Endothelial cell of umbilical vein (primary cell): ENCODE measurements at regions of chr3 and their contacts with region 1.

Region 1: GRCh38 chr3:23761440-23761896 is 44.3 kb upstream of the UBE2E1 start:
- DNase-seq: peak; percentile 60
- H3K4me3 ChIP-seq: no peak overlapping the region
- H3K27ac ChIP-seq: no peak overlapping the region
- H3K4me1 ChIP-seq: no peaks in the 10 kb centered on the region
- H3K27me3 ChIP-seq: no peaks in the 10 kb centered on the region
- CTCF ChIP-seq: peak; percentile 46
- POLR2A ChIP-seq: no peak

Region 2: DNA sequence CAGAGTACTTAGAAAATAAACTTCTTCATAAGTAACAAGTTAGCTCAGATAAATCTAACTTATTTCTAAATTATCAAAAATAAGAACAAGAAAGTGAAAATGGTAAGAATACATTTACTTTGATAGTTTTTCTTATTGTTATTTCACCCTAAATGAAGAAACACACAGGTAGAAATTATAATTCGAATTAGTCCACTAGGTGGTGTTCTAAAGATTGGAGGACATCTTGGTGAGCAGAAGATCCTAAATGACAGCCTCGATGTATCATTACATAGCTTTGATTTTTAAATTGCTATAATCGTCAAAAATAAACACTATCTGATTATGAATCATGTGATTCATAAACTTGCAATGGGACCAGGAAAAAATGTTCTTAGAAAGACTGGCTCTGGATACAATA is 839.2 kb before region 1 on chr3:
- CTCF ChIA-PET with region 1: interaction called, 4 read pairs
- POLR2A ChIA-PET with region 1: no interaction called
- dilution Hi-C with region 1: no loop called
- intact Hi-C with region 1: loop called (anchors 2 kb)
- DNase-seq: peak; percentile 6
- H3K4me3 ChIP-seq: no peak overlapping the region
- H3K27ac ChIP-seq: no peak overlapping the region
- H3K4me1 ChIP-seq: peaks cover 13% of the 10 kb centered on the region
- H3K27me3 ChIP-seq: no peaks in the 10 kb centered on the region
- CTCF ChIP-seq: no peak
- POLR2A ChIP-seq: no peak

Region 3: DNA sequence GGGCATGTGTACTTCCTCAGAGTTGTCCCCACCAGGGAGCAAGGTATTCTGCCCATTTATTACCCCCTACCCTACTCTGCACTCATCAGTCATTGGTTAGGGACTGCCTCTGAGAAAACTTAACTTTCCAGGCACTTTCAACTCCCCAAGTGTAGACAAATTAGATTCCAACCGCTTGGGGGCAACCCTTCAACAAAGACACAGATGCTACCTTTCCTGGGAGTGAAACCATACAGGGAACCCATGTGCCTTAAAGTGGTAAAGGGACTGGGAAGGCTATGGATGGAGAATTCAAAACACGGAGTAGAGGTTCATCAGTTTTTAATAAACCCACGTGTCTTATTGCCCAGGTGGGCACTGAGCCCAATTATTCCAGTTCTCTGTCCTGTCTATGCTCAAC is 577.7 kb before region 1 on chr3:
- CTCF ChIA-PET with region 1: no interaction called
- POLR2A ChIA-PET with region 1: no interaction called
- dilution Hi-C with region 1: no loop called
- intact Hi-C with region 1: loop called (anchors 1 kb)
- DNase-seq: peak; percentile 56
- H3K4me3 ChIP-seq: no peak overlapping the region
- H3K27ac ChIP-seq: no peak overlapping the region
- H3K4me1 ChIP-seq: no peaks in the 10 kb centered on the region
- H3K27me3 ChIP-seq: peaks cover 0 to 5% of the 10 kb centered on the region in 2 experiments
- CTCF ChIP-seq: peak; percentile 35 to 50
- POLR2A ChIP-seq: no peak

Region 4: DNA sequence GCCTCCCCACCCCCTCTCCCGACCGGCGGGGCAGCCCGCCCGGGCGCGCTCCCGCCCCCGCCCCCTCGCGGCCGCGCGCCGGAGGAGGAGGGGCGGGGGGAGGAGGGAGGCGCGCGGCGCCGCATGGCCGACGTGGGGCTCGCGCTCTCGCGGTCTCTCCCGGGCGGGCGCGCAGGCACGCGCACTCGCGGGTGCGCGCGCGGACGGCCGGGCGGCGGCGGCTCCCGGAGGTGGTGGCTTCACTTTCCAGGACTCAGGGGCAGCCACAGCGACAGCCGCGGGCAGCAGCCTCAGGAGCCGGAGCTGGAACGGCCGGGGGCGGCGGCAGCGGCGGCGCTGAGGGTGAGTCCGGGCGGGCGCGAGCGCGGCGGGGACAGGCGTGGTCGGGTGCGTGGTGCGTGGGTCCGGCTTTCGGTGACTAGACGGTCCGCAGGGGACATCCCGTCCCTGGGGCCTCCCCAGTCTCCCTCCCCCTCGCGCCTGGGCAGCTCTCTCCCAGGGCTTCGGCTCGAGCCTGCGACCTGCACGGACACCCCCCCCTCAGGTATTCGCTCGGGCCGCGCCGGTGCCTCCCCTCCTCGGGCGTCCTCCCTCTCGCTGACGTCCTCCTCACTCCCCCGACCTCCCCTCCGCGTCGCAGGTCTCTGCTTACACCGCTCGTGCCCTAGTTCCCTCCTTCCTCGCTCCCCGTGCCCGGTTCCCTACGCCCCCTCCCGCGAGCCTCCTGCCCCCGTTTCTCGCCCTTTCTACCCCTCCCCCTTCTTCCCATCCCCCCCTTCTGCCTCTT is 558.4 kb before region 1 on chr3 and contains the start of gene UBE2E2:
- CTCF ChIA-PET with region 1: no interaction called
- POLR2A ChIA-PET with region 1: no interaction called
- dilution Hi-C with region 1: no loop called
- intact Hi-C with region 1: loop called (anchors 5 kb)
- DNase-seq: peak; percentile 66
- H3K4me3 ChIP-seq: peak within 1 kb of the TSS; percentile 94 to 97 (median 95)
- H3K27ac ChIP-seq: peak within 1 kb of the TSS; percentile 58
- H3K4me1 ChIP-seq: peaks cover 5% of the 10 kb centered on the region
- H3K27me3 ChIP-seq: peaks cover 6 to 8% of the 10 kb centered on the region in 2 experiments
- CTCF ChIP-seq: no peak
- POLR2A ChIP-seq: no peak
- total RNA-seq, gene UBE2E2: 32.8 and 45.4 TPM in 2 replicates

Region 5: GRCh38 chr3:23648326-23648995 is 113.0 kb before region 1 on chr3:
- CTCF ChIA-PET with region 1: interaction called, 10 read pairs
- POLR2A ChIA-PET with region 1: no interaction called
- dilution Hi-C with region 1: no loop called
- intact Hi-C with region 1: no loop called
- DNase-seq: peak; percentile 26
- H3K4me3 ChIP-seq: no peak overlapping the region
- H3K27ac ChIP-seq: no peak overlapping the region
- H3K4me1 ChIP-seq: peaks cover 13% of the 10 kb centered on the region
- H3K27me3 ChIP-seq: no peaks in the 10 kb centered on the region
- CTCF ChIP-seq: no peak
- POLR2A ChIP-seq: no peak

Region 6: GRCh38 chr3:23712656-23713559 is 48.6 kb before region 1 on chr3:
- CTCF ChIA-PET with region 1: interaction called, 11 read pairs
- POLR2A ChIA-PET with region 1: no interaction called
- dilution Hi-C with region 1: no loop called
- intact Hi-C with region 1: loop called (anchors 2 kb)
- DNase-seq: peak; percentile 85
- H3K4me3 ChIP-seq: peak overlapping the region in 1 of 3 experiments; percentile 39
- H3K27ac ChIP-seq: no peak overlapping the region
- H3K4me1 ChIP-seq: peaks cover 13% of the 10 kb centered on the region
- H3K27me3 ChIP-seq: no peaks in the 10 kb centered on the region
- CTCF ChIP-seq: no peak
- POLR2A ChIP-seq: no peak

Region 7: GRCh38 chr3:23751212-23751723 is 10.2 kb before region 1 on chr3:
- CTCF ChIA-PET with region 1: interaction called, 12 read pairs
- POLR2A ChIA-PET with region 1: no interaction called
- dilution Hi-C with region 1: no loop called
- intact Hi-C with region 1: no loop called
- DNase-seq: peak; percentile 46
- H3K4me3 ChIP-seq: no peak overlapping the region
- H3K27ac ChIP-seq: no peak overlapping the region
- H3K4me1 ChIP-seq: peaks cover 37% of the 10 kb centered on the region
- H3K27me3 ChIP-seq: no peaks in the 10 kb centered on the region
- CTCF ChIP-seq: no peak
- POLR2A ChIP-seq: no peak